OCI-LY7 (cell line): ENCODE measurements at regions of chr6 and their contacts with region 1.

Region 1: DNA sequence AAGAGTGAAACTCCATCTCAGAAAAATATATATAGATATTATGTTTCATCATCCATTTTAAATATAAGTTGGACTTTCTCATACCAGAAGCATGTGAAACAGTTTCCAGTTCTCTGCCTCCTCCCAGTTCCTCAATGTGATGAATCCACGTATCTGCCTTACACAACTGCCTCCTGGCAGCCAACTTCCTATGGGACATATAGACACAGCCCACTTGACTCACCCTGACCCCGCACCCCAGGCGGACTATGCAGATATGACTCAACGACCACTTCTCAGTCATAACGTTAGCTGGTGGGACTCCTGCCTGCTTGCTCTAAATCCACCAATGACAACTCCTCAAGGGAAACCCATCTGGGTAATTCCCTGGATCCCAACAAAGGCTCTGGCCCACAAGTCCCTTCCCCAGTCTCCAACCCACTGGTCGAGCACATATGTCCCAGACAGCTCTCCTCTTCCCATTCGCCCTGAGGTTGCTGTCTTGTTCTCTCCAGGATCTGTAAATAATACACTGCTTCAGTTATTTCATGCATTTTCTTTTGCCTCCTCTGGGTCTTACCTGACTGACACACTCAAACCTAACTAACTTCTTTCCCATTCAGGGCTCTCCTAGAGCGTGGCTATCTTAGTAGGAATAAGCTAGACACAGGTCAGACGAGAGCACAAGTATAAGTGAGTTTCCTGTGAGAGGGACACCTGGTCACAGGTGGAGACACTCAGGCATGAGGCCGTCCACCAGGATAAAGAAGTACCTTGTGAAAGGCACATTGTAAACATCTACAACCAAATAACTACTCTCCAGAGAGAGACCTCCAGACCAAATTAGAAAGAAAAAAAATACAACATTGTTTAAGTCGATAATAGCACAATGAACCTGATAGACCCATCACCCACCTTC is 548.5 kb downstream of the CD83 start:
- DNase-seq: peak; percentile 53
- H3K4me3 ChIP-seq: peak overlapping the region; percentile 2
- H3K27ac ChIP-seq: no peak overlapping the region
- H3K4me1 ChIP-seq: peaks cover 89% of the 10 kb centered on the region
- CTCF ChIP-seq: no peak

Region 2: GRCh38 chr6:14381829-14382677 is 284.0 kb before region 1 on chr6:
- CTCF ChIA-PET with region 1: no interaction called
- POLR2A ChIA-PET with region 1: no interaction called
- intact Hi-C with region 1: loop called (anchors 2 kb)
- DNase-seq: peak; percentile 88
- H3K4me3 ChIP-seq: peak overlapping the region; percentile 28
- H3K27ac ChIP-seq: peak overlapping the region; percentile 74
- H3K4me1 ChIP-seq: peaks cover 57% of the 10 kb centered on the region
- CTCF ChIP-seq: peak; percentile 40

Region 3: DNA sequence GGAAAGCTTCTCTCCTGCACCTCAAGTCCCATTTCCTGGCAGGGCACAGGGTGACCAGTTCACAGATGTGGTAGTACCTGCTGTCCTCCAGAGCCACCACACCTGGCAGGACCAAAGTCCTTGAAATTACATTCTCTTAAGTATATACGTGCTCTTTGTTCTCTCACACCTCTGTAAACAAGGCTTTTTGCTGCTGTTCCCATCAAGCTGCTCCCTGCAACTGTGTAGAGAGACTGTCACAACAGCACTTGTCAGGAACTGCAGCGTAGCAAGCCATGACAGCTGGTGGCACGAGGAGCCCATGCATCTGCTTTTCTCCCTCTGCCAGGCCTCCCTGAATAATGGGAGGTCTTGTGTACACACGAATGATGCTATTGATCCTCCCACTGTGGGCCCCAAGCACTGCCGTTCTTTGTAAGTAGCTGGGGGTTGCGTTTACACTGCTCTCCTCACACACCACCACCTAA is 116.7 kb before region 1 on chr6:
- CTCF ChIA-PET with region 1: no interaction called
- POLR2A ChIA-PET with region 1: no interaction called
- intact Hi-C with region 1: loop called (anchors 2 kb)
- DNase-seq: peak; percentile 39
- H3K4me3 ChIP-seq: peak overlapping the region; percentile 26
- H3K27ac ChIP-seq: peak overlapping the region; percentile 51
- H3K4me1 ChIP-seq: peaks cover 47% of the 10 kb centered on the region
- CTCF ChIP-seq: no peak

Region 4: GRCh38 chr6:14728396-14729024 is 62.4 kb after region 1 on chr6:
- CTCF ChIA-PET with region 1: no interaction called
- POLR2A ChIA-PET with region 1: interaction called, 3 read pairs
- intact Hi-C with region 1: loop called (anchors 1 kb)
- DNase-seq: peak; percentile 44
- H3K4me3 ChIP-seq: peak overlapping the region; percentile 59
- H3K27ac ChIP-seq: peak overlapping the region; percentile 98
- H3K4me1 ChIP-seq: peaks cover 57% of the 10 kb centered on the region
- CTCF ChIP-seq: no peak